Activated naive CD4-positive, alpha-beta T cell treated with anti-CD3 and anti-CD28 coated beads, Interleukin-2, amount 10 ng/mL, durations not matched to agents 7 days and 5 days (primary cell): ENCODE measurements at regions of chr5 and their contacts with region 1.

Region 1: DNA sequence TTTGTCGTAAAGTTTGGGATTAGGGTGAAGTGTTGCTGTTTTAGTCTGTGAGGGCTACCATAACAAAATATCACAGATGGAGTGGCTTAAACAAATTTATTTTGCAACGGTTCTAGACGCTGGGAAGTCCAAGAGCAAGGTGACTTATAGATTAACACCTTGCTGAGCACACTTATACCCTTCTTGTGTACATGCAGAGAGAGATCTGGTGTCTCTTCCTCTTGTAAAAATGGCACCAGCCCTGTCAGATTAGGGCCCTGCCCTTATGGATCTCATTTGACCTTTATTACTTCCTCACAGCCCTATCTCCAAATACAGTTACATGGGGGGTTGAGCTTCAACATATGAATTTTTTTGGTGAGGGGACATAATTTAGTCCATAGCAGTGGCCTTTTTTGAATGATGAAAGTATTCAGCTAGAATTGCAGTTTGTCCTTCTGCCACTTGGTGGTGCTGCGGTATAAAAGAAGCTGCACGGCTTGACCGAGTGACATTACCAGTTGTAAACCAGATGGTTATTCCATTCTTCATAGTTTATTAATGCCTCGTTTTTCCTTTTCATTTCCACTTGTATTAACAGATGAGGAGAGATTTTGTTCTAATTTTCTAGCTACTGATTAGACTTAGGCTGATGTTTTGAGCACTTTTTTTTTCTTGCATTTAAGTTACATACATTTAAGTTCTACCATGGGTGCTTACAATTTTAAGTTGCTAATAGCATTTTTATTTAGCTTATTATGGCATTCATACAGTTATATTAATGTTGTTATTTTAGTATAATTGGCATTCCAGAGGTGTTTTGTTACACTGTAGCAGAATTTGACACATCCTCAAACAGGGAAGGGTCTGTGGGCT is 19.4 kb downstream of the DCP2 start:
- DNase-seq: peak; percentile 83
- H3K4me3 Mint-ChIP-seq: no peak overlapping the region
- H3K27ac Mint-ChIP-seq: no peak overlapping the region
- H3K4me1 Mint-ChIP-seq: peaks cover 9% of the 10 kb centered on the region
- H3K27me3 Mint-ChIP-seq: no peaks in the 10 kb centered on the region

Region 2: GRCh38 chr5:113038714-113039113 is 42.7 kb after region 1 on chr5:
- CTCF ChIA-PET with region 1: interaction called, 28 read pairs
- DNase-seq: no peak
- H3K4me3 Mint-ChIP-seq: no peak overlapping the region
- H3K27ac Mint-ChIP-seq: no peak overlapping the region
- H3K4me1 Mint-ChIP-seq: no peaks in the 10 kb centered on the region
- H3K27me3 Mint-ChIP-seq: peaks cover 9% of the 10 kb centered on the region

Region 3: DNA sequence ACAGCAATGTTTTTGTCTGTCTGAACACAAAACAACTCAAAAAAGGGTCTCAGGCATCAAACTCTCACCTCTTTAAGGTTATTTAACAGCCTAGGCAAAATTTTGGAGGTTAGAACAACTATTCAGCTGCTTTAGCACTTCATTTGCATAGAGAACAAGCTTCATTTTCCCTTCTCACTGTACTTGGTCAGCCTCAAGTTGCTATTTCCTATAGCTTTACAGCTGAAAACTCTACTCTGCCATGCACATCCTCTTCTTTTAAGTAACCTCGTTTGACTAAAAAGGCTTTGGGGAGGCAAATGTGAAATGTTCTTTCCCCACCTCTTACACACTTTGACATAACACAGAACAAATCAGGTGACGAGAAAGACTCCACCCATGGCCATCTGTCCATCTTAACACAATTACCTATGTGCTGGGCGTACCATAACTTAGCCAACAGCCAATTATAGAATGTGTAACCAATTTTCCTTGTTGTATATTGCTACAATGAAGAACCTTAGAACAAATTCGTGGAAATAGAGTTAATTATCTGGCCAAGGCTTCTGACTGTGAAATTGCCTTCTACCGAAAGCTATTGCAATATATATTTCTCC is 176.3 kb after region 1 on chr5:
- CTCF ChIA-PET with region 1: no interaction called
- DNase-seq: no peak
- H3K4me3 Mint-ChIP-seq: no peak overlapping the region
- H3K27ac Mint-ChIP-seq: no peak overlapping the region
- H3K4me1 Mint-ChIP-seq: no peaks in the 10 kb centered on the region
- H3K27me3 Mint-ChIP-seq: peaks cover 30% of the 10 kb centered on the region

Region 4: GRCh38 chr5:113294311-113295110 is 298.5 kb after region 1 on chr5:
- CTCF ChIA-PET with region 1: interaction called, 11 read pairs
- DNase-seq: peak; percentile 83
- H3K4me3 Mint-ChIP-seq: peak overlapping the region; percentile 82
- H3K27ac Mint-ChIP-seq: peak overlapping the region; percentile 25
- H3K4me1 Mint-ChIP-seq: peaks cover 21% of the 10 kb centered on the region
- H3K27me3 Mint-ChIP-seq: peaks cover 74% of the 10 kb centered on the region

Region 5: DNA sequence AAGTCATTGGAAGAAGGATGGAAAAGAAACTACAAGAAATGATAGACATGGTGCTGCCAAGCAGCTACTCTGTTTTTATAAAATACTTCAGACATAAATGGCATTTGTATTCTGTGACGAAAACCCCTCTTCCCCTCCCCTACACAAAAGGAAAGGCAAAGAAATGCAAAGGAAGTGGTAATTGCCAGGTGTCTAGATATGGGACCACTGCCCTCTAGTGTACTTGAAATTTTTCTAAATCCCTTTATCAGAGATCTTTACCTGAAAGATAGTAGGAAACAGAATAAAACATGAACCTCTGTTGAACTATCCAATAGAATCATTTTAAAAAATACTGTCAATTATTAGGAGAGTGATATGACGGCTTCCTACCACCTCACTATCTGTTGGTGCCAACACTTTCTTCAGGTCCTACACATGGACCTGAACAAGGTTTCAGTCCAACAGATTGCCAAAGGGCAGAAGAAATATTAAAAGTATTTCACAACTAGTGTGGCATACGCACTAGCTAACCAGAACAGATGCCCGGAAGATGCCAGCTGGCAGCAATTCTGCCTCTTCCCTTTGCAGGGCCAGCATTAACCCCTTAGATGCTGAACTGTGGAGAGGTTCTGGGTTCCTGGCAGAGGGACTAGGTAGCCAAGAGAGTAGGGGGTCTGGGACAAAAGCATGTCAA is 334.7 kb after region 1 on chr5:
- CTCF ChIA-PET with region 1: interaction called, 42 read pairs
- DNase-seq: no peak
- H3K4me3 Mint-ChIP-seq: no peak overlapping the region
- H3K27ac Mint-ChIP-seq: no peak overlapping the region
- H3K4me1 Mint-ChIP-seq: peaks cover 25% of the 10 kb centered on the region
- H3K27me3 Mint-ChIP-seq: peaks cover 13% of the 10 kb centered on the region

Region 6: GRCh38 chr5:113336975-113337374 is 341.0 kb after region 1 on chr5:
- CTCF ChIA-PET with region 1: interaction called, 42 read pairs
- DNase-seq: peak; percentile 38
- H3K4me3 Mint-ChIP-seq: no peak overlapping the region
- H3K27ac Mint-ChIP-seq: no peak overlapping the region
- H3K4me1 Mint-ChIP-seq: peaks cover 22% of the 10 kb centered on the region
- H3K27me3 Mint-ChIP-seq: peaks cover 41% of the 10 kb centered on the region

Region 7: DNA sequence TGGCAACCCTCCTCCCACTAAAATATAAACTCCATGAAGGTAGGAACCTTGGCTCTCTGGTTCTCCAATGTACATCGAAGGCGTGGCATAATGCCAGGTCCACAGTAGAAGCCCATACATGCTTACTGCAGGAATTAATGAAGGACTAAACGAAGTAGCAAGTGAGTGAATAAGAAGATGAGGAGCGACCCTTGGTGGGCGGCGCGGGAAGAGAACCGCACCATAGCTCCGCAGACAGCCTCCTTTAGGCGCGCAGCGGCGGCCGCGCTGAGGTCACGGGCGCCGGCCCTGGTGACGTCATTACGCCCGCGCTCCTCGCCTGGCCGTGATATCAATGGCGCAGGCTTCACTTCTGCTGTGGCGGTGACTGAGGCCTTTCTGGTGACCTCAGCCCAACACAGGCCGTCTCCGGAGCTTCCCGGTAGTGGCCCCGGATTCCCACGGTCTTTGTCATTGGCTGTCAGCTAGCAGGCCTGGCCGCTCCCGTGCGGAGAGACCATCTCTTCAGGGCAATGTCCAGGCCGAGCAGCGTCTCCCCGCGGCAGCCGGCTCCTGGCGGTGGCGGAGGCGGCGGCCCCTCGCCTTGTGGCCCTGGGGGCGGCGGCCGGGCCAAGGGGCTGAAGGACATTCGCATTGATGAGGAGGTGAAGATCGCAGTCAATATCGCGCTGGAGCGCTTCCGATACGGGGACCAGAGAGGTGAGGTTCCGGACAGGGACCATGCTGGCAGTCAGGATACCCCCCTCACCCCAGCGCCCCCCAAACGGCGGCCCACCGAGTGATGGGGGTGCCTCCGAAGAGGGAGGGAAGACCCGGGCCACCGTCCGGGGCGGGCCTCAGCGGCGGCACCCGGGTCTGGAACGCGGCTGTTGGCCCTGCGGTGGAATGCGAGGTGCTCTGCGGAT is 517.6 kb after region 1 on chr5 and contains the start of gene YTHDC2:
- CTCF ChIA-PET with region 1: interaction called, 20 read pairs
- DNase-seq: peak; percentile 91
- H3K4me3 Mint-ChIP-seq: peak within 1 kb of the TSS; percentile 86
- H3K27ac Mint-ChIP-seq: peak within 1 kb of the TSS; percentile 84
- H3K4me1 Mint-ChIP-seq: peaks cover 32% of the 10 kb centered on the region
- H3K27me3 Mint-ChIP-seq: peaks cover 19% of the 10 kb centered on the region

Region 8: DNA sequence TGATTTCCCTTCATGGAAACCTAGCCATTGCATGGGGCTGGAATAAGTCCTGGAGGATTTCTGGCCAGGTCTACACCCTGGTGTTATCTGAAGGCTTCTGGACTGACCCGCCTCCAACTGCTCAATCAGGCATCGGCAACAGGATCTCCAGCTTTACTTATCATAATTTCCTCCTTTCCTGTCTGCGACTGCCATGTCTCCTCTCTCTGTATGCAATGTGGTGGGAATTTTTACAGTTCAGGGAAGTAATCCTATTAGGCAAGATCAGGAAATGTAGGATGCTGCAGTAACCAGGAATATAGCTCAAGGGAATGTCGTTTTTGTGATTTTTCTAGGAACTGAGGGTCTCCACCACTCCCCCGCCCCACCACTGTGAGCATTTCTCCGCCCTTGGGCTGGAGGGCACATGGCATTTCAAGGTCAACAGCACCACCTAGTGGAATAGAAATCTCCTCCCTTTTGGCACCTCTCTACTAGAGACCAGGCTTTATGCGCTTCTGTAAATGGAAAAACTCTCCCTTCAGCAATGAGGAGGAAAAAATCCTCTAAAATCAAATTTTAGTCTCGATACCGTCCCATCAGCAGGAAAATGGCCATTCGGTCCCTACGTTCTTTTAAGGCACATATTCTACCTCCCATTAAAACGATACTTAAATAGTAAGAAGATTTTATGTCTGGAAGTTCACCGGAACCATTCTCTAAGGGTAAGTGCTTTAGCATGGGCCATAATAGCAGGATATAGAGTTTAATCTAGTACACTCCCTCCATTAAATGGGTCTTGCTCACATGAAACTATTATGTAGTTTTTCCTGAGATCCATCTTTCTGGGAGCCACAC is 610.5 kb after region 1 on chr5:
- CTCF ChIA-PET with region 1: interaction called, 12 read pairs
- DNase-seq: peak; percentile 60
- H3K4me3 Mint-ChIP-seq: no peak overlapping the region
- H3K27ac Mint-ChIP-seq: no peak overlapping the region
- H3K4me1 Mint-ChIP-seq: peaks cover 15% of the 10 kb centered on the region
- H3K27me3 Mint-ChIP-seq: peaks cover 30% of the 10 kb centered on the region